Head of caudate nucleus (tissue), 42 donors: ENCODE measurements at regions of chr9 and their contacts with region 1.

Region 1: DNA sequence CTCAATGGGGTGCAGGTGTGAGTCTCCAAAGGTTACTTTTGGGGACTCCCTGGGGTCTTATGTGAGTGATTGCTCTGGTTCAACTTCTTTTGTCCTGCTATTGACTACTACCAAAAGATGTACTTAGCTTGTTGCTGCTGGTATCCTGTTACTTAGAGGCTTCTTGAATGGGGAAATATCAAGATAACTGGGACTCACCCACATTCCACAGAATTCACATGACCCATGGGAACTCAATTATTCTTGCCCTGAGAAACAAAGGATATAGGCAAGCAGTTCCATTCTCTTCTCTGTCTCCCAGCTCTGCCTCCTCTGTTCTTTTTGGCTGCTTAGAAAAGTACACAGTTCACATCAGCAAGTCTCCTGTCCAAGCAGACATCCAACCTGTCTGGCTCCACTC is 105.9 kb downstream of the UNC13B start:
- DNase-seq: no peak

Region 2: DNA sequence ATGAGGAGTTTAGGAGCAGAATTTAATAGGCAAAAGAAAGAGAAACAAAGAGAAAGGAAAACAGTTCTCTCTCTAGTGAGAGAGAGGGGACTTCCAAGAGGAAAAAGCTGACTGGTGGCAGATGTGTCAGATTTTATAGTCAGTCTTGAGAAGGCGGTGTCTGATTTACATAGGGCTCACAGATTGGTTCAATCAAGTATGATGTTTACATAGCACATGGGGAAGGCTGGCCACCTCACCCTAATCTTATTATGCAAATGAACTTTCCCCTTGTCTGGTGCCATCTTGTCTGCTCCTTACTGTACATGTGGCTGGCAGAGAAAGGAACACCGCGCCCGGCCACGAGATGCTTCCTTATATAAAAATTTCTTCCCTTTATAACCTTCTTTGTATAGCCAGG is 81.2 kb before region 1 on chr9:
- intact Hi-C with region 1: no loop called
- DNase-seq: no peak

Region 3: DNA sequence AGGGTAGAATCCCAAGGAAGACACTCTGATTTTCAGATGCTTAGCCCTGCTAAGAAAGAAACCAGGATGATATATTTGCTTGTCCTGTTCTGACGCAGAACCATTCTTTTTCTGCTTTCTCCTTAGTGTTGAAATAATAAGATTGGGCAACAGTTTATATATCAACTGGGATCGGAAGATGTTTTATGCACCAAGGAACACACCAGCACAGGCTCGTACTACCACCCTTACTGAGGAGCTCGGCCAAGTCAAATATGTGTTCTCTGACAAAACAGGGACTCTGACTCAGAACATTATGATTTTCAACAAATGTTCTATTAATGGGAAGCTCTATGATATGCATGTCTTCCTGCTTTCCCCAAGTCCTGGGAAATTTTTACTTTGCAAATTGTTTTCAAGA is 203.2 kb after region 1 on chr9:
- intact Hi-C with region 1: loop called (anchors 10 kb)
- DNase-seq: no peak